AG04450 (cell line): ENCODE measurements at regions of chr14 and their contacts with region 1.

Region 1: GRCh38 chr14:102096214-102097114 is 9.6 kb upstream of the HSP90AA1 start:
- DNase-seq: peak; percentile 34
- H3K4me3 ChIP-seq: no peak overlapping the region
- H3K27ac ChIP-seq: no peak overlapping the region
- H3K27me3 ChIP-seq: no peaks in the 10 kb centered on the region
- CTCF ChIP-seq: peak; percentile 91

Region 2: DNA sequence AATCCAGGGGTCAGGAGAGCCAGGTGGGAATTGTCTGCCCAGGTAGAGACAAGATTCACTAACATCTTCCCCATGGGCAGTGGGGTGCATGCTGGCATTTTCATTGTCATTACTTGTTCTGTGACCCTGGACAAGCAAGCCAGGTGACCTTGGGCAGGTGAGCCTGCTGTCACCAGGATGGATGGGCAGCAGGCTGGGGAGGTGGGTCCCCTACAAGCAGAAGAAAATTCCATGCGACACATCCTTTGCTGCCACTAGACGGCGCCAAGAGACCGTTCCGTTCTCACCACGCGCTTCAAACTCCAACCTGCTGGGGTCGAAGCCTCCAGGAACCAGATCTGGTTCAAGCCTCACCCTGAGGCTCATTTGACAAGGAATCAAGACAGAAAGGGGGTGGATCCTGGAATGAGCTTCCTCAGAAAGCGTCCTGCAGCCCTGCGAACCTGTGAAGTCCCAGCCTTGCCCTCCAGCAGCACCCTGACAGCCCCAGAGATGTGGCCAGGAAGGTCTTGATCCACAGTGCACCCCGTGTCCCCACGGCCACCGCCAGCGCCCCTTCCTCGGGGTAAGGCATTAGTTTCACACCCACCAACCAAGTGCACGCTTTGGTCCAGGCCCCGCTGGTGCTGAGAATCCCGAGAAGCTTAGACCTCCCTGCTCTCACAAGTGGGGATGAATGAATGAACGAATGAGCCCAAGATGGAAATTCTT is 135.3 kb before region 1 on chr14:
- CTCF ChIA-PET with region 1: interaction called, 38 read pairs
- POLR2A ChIA-PET with region 1: no interaction called
- DNase-seq: peak; percentile 50
- H3K4me3 ChIP-seq: no peak overlapping the region
- H3K27ac ChIP-seq: no peak overlapping the region
- H3K27me3 ChIP-seq: no peaks in the 10 kb centered on the region
- CTCF ChIP-seq: peak; percentile 91

Region 3: DNA sequence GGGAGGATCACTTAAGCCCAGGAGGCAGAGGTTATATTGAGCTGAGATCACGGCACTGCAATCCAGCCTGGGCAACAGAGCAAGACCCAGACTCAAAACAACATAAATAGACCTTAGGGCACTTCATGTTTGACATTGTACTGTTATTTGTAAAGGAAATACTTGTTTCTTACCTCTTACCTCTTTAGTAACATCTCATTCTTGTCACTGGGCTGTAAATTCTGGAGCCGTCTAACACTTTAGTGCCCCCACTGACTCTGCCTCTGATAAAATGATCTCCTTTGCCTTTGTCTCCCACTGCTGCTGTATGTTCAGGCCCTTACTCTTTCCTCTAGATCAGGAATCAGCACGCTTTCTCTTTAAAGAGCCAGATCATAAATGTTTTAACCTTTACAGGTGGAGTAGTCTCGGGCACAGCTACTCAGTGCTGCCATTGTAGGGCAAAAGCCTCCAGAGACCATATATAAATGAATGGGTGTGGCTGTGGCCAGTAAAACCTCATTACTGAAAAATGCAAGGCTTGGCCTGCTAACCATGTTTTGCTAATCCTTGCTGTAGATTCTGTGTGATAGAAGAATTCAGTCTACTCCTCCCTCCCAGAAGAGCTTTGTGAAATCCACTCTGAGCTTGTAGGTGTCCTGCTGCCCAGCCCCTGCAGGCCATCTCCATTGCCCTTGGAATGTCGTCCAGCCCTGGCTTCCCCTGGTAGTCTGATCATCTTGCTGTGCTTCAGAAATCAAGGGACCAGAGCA is 67.9 kb before region 1 on chr14:
- CTCF ChIA-PET with region 1: interaction called, 10 read pairs
- POLR2A ChIA-PET with region 1: interaction called, 4 read pairs
- DNase-seq: peak; percentile 43
- H3K4me3 ChIP-seq: no peak overlapping the region
- H3K27ac ChIP-seq: peak overlapping the region; percentile 71
- H3K27me3 ChIP-seq: no peaks in the 10 kb centered on the region
- CTCF ChIP-seq: no peak

Region 4: DNA sequence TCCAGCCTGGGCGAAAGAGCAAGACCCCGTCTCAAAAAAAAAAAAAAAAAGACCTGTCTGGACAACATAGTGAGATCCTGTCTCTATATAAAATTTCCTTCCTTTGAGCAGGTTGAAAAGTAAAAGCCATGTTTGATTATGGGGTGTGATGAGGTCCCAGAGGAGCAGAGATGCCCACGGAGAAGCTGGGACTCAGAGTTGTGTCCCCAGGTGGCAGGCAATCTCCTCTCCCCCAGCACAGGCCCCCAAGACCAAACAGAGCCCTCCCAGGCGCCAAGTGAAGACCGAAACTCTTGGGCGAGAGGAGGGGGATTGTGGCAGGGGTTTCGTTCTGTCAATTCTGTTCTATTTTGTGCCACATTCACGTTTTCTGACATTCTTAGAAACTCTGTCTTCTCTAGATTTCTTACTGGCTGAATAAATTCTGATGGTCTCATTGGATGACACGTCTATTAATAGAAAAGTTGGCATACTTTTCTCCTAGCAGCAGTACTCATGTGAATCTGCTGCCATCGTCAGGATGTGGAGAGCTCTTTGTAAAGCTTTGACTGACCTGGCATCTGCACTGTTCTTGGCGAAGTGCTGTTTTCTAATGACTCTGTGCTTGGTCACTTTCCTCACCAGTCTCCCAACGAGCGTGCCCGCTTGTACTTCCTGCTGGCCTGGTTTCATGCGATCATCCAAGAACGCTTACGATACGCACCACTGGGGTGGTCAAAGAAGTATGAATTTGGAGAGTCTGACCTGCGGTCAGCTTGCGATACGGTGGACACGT is 53.0 kb before region 1 on chr14:
- CTCF ChIA-PET with region 1: no interaction called
- POLR2A ChIA-PET with region 1: no interaction called
- DNase-seq: no peak
- H3K4me3 ChIP-seq: no peak overlapping the region
- H3K27ac ChIP-seq: no peak overlapping the region
- H3K27me3 ChIP-seq: no peaks in the 10 kb centered on the region
- CTCF ChIP-seq: no peak

Region 5: DNA sequence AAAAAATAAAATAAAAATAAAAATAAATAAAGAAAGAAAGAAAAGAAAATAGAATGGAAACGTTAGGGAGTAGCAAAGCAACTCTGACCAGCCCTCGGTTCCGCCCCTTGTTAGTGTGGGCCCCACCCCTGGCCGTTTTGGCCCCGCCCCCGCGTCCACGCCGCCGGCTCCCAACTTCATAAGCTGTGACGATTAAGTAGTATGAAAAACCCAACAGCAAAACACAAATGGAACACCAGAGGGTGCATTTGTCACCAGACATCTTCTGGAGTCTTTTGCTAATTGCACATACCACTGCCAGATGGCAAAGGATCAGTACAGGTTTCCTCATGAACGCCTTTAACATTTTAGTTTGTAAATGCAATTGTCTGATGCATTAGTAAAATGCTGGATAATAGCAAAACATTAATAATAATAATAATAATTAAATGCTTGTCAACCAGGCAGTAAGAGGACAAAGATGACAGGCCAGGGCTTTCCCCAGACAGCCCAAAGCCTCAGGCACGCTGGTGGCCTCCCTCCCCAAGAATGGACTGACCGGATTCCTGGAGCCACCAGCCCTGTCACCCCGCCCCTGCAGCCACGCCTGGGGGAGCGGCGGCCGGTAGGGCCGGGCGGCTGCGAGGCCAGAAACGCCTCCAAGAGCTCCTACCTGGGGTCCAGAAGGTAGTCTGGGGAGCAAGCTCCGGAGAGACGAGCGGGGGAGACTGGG is 33.2 kb before region 1 on chr14:
- CTCF ChIA-PET with region 1: interaction called, 21 read pairs
- POLR2A ChIA-PET with region 1: no interaction called
- DNase-seq: peak; percentile 47
- H3K4me3 ChIP-seq: no peak overlapping the region
- H3K27ac ChIP-seq: no peak overlapping the region
- H3K27me3 ChIP-seq: no peaks in the 10 kb centered on the region
- CTCF ChIP-seq: peak; percentile 57

Region 6: DNA sequence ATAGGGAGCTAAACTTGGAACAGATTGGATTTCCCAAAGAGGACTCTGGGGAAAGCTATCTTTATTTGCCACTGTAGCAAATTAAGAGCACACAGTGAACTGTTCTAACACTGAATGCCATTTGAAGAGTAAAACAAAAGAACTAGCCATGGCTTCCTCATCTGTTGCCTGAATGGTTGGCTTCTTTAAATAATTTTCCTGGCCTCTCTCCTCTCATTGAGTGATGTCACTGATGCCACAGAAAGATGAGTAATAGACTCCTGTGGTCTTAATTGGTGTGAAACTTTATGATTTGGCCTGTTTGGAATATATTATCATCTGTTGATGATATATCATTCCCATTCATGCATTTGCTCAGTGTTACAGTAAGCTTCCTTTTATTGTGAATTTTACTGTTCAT is 85.7 kb after region 1 on chr14:
- CTCF ChIA-PET with region 1: no interaction called
- POLR2A ChIA-PET with region 1: no interaction called
- DNase-seq: no peak
- H3K4me3 ChIP-seq: no peak overlapping the region
- H3K27ac ChIP-seq: no peak overlapping the region
- H3K27me3 ChIP-seq: no peaks in the 10 kb centered on the region
- CTCF ChIP-seq: no peak